ENCODE measurements at regions of chr1 and their contacts with region 1.

Region 1: GRCh38 chr1:40849801-40850592 is 12.2 kb downstream of the CITED4 start:
- DNase-seq: peak; percentile 92
- H3K4me3 ChIP-seq: peak overlapping the region in 1 of 8 donors; percentile 35
- H3K27ac ChIP-seq: peak overlapping the region in 2 of 8 donors; percentile 8 to 12
- H3K4me1 ChIP-seq: peaks cover 0 to 26% (median 15%) of the 10 kb centered on the region in 6 donors
- H3K27me3 ChIP-seq: no peaks in the 10 kb centered on the region
- CTCF ChIP-seq: peak; percentile 90 to 98 (median 95)
- POLR2A ChIP-seq: no peak

Region 2: DNA sequence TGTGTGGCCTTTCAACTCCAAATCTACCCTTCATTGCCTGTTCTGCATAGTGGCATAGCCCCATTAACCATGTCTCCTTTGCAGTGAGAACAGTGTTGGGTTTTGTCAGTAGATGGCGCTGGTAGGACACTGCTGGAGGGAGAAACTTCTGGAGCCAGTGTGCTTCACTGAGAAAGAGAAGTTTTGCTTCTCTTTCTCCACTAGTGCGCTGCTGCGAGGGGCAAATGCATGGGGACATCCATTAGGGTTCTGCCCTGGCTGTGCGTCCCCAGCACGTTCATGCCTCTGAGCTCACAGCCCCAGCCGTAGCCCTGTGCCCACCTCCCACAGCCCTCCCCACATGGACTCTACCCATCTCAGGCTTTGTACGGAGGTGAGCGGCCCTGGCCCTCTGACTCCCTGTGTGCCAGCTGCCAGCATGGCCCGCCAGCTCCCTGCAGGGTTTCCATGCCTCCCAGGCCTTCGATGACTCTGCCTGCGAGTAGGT is 237.6 kb before region 1 on chr1:
- intact Hi-C with region 1: loop called (anchors 2 kb)
- DNase-seq: no peak
- H3K4me3 ChIP-seq: no peak overlapping the region
- H3K27ac ChIP-seq: no peak overlapping the region
- H3K4me1 ChIP-seq: no peaks in the 10 kb centered on the region
- H3K27me3 ChIP-seq: no peaks in the 10 kb centered on the region
- CTCF ChIP-seq: peak; percentile 70 to 87 (median 81)
- POLR2A ChIP-seq: no peak

Region 3: DNA sequence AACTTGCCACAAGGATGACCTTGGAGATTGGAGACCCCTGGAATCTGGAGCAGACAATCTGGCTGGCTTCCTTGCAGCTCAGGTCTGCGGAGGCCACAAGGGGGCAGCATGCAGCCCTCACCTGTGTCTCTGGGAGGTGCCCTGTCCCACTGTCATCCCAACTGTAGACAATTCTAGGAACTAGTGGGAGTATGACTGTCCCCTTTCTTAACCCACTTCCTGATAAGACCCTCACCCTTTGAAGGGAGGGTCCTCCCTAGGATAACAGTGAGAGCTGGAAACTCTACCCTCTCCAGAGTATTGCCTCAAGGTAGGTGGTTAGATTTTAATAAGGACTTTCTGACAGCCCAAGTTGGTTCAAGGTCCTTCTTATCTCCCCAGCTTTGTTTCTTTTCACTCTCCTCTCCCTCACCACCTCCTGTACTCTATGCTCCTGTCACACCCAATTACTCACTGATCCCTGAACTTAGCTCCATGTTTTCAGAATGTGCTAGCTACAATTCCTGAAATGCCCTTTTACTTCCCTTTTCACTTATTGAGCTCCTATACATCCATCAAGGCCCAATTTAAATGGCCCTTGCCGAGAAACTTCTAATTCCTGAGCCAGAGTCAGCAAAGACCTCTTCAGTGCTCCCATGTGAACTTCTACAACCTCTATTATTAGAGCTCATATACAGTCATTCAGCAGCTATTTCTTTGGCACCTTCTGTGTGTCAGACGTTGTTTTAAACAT is 75.6 kb before region 1 on chr1:
- intact Hi-C with region 1: loop called (anchors 5 kb)
- DNase-seq: peak; percentile 86
- H3K4me3 ChIP-seq: no peak overlapping the region
- H3K27ac ChIP-seq: peak overlapping the region in 5 of 8 donors; percentile 31 to 54 (median 46)
- H3K4me1 ChIP-seq: peaks cover 0 to 14% (median 3%) of the 10 kb centered on the region in 6 donors
- H3K27me3 ChIP-seq: no peaks in the 10 kb centered on the region
- CTCF ChIP-seq: peak; percentile 19 to 84 (median 59)
- POLR2A ChIP-seq: no peak

Region 4: DNA sequence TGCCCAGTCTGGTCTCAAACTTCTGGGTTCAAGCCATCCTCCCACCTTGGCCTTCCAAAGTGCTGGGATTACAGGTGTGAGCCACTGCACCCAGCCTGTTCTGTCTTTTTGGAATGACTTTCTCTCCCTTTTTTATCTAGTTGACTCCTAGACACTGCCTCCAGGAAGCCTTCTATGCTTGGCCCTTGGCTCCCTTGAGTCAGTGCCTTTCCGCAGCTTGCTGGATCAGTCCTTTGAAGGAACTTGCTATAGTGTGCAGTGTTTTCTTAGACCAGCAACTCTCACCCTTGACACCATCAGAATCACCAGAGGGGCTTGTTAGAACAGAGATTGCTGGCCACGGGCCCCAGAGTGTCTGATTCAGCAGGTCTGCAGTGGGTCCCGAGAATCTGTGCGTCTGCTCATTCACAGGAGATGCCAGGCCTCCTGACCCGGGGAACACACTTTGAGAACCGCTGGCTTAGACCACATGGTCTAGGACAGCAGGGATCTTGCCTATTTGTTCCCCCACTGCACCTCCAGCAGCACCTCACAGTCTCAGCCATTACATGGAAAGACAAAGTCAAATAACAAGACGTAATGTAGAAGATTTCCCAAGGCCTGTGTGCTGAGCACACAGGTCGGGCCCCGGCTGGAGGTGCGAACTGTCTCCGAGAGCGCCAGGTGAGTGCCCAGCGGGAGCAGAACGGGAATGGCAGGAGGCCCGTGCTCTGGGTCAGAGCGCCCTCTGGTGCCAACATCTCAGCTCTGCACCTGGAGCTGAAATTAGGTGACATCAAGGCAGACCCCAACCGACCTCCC is 102.1 kb after region 1 on chr1:
- intact Hi-C with region 1: loop called (anchors 5 kb)
- DNase-seq: peak; percentile 85
- H3K4me3 ChIP-seq: no peak overlapping the region
- H3K27ac ChIP-seq: no peak overlapping the region
- H3K4me1 ChIP-seq: peaks cover 0 to 39% (median 21%) of the 10 kb centered on the region in 6 donors
- H3K27me3 ChIP-seq: peaks cover 0 to 41% (median 4%) of the 10 kb centered on the region in 7 donors
- CTCF ChIP-seq: peak; percentile 45 to 89 (median 83)
- POLR2A ChIP-seq: no peak

Region 5: DNA sequence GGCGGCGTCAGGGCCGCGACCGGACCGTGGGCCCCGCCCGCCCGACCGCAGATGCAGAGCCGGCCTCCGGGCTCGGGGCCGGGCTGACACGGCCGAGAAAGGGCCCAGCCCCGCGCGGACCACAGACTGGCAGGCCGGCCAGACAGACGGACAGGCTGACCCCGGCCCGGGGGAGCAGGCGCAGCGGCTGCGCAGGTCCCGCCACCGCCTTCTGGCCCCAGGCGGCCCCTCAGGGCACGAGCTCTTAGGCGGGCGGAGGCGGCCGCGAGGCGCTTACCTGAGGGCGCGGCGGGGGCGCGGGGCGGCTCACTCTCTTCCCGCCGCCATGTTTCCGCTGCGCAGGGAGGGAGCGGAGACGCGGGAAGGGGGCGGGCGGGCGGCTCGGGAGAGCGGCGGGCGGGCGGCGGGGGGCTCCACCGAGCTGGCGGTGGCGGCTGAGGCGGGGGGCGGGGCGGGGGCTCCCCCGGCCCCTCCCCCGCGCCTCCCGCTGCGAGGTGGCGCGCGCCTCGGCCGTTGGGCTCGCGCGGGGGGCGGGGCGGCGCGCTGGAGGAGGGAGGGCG is 391.9 kb after region 1 on chr1 and contains the start of gene SCMH1:
- intact Hi-C with region 1: no loop called
- DNase-seq: peak; percentile 90
- H3K4me3 ChIP-seq: peak within 1 kb of the TSS; percentile 70 to 95 (median 84)
- H3K27ac ChIP-seq: peak within 1 kb of the TSS; percentile 85 to 96 (median 92)
- H3K4me1 ChIP-seq: peaks cover 13 to 54% (median 44%) of the 10 kb centered on the region in 6 donors
- H3K27me3 ChIP-seq: no peaks in the 10 kb centered on the region
- CTCF ChIP-seq: no peak
- POLR2A ChIP-seq: no peak
- total RNA-seq, gene SCMH1: 25.0 to 40.5 (median 27.6) TPM

Measured in spleen (tissue), 13 donors.